ENCODE measurements at regions of chr1 and their contacts with region 1.

Region 1: GRCh38 chr1:38046884-38047602 is 450 bp upstream of the POU3F1 start:
- ATAC-seq: peak; percentile 75 to 86 (median 82)
- H3K4me3 ChIP-seq: peak overlapping the region; percentile 40 to 47 (median 43)
- H3K27ac ChIP-seq: no peak overlapping the region
- H3K4me1 ChIP-seq: peaks cover 45 to 48% of the 10 kb centered on the region in 2 donors

Region 2: DNA sequence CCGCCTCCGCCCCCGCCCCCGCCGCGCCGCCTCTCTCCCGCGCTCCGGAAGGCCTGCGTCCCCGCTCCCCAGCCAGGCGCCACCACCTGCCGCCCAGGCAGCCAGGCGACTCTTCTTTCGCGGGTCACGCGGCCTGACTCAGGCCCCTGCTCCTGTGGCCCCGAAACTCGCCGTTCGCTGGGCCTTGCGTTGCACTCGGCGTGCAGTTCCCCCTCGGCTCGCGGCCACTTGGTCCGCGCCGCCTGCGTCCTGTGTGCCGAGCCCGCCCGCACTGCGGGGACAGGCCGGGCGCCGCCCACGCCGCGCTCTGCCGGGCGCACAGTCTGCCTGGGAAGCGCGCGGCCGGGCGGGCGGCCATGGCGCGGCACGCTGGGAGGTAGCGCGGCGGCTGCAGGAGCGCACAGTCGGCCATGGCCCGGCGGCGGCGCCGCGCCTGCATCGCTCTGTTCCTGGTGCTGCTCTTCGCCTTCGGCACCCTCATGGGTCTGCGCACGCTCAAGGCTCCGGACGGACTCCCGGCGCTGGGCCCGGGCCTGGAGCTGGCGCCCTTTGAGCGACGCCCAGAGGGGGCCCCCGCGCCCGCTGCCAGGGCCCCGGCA is 253.2 kb before region 1 on chr1 and contains the start of gene MANEAL:
- in situ Hi-C with region 1: no loop called
- ATAC-seq: peak; percentile 89 to 94 (median 91)
- H3K4me3 ChIP-seq: peak within 1 kb of the TSS; percentile 45 to 92 (median 63)
- H3K27ac ChIP-seq: peak within 1 kb of the TSS; percentile 14 to 34
- H3K4me1 ChIP-seq: peaks cover 8 to 9% of the 10 kb centered on the region in 2 donors
- total RNA-seq, gene MANEAL: 2.3 to 49.7 (median 30.3) TPM

Region 3: DNA sequence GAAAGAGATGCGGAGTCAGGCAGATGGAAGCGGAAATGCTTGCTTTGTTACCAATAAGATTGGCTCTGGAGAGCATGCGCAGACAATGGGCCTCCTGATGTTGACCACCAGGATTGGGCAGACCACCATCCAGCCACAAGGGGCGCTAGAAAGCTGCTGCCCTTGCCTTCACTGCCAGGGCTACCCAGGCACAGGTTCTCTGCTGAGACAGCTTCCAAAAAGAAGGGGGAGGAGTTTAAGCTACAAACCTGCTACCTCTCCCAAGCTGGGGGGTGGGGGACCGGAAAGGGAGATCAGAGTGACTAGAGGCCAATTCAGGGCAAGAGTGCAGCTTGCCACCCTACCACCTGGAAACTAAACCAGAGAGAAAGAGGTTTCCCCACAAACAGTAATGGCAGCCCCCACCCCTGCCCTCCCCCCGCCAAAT is 442.8 kb after region 1 on chr1:
- in situ Hi-C with region 1: loop called in 1 of 9 experiments (anchors 25 kb)
- ATAC-seq: peak in 6 of 8 experiments; percentile 33 to 72 (median 54)
- H3K4me3 ChIP-seq: no peak overlapping the region
- H3K27ac ChIP-seq: no peak overlapping the region
- H3K4me1 ChIP-seq: peaks cover 22 to 28% of the 10 kb centered on the region in 2 donors

Region 4: DNA sequence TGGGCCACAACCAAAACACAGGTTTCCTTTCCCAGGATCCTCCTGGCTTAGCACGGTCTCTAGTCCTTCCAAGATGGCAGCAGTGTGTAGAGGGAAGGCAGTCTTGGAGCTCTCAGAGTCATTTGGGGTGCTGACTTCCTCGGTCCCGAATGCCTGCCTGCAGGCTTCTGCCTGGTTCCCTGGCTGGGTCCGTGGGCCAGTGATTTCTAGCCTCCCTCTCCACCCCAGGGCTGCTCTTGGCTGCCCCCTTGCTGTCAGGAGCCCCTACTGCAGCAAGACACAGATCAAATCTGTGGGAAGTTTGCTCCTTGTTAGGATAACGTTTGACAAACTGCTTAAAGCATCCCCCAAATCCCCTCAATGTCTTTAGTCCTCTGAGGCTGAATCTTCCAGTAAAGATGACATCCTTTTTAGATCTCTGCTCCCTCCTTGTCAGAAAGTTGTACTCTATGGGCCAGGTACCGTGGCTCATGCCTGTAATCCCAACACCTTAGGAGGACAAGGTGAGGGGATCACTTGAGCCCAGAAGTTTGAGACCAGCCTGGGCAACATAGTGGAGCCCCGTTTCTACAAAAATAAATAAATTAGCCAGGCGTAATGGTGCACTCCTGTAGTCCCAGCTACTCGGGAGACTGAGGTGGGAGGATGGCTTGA is 540.1 kb after region 1 on chr1:
- in situ Hi-C with region 1: loop called in 1 of 9 experiments (anchors 25 kb)
- ATAC-seq: peak; percentile 11 to 73 (median 46)
- H3K4me3 ChIP-seq: no peak overlapping the region
- H3K27ac ChIP-seq: no peak overlapping the region
- H3K4me1 ChIP-seq: no peaks in the 10 kb centered on the region

Region 5: DNA sequence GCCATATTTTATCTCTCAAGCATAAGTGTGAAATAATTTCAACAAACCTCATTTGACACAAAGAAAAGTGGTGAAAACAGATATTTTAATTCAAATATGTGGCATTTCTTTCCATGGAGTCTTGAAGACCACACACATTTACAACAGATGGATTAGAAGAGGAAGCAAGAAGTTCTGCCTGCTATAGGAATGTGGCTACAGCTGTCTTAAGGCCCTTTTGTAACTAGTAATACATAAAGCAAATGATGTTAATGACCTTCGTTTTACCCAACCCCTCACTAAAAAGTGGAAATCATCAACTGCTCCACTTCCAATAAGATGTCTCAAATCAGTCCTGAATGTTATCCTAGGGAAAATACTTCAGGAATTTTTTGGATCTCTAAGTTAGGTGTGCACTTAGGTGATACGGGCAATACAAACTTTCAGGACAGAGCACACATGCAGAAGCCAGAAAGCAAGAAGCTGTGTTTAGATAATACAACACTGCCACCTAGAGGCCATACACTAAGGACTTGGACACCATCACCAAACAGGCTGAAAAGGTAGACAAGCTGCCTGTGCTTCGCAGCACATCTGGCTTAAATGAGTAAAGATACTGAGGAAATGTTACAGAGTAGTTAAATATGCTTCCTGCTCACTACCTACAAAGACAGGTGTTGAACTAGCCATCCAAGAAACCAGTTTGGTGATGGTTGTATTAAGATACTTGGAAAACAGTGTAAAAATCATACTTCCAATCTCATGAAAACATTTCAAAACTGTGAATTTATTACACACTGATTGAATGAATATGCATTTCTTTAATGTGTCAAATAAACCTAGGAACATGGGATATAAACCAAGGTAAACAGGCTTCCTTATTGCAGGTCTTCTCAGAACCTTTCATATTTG is 788.1 kb after region 1 on chr1:
- in situ Hi-C with region 1: loop called in 2 of 9 experiments (anchors 25 kb)
- ATAC-seq: peak; percentile 67 to 97 (median 95)
- H3K4me3 ChIP-seq: no peak overlapping the region
- H3K27ac ChIP-seq: no peak overlapping the region
- H3K4me1 ChIP-seq: peaks cover 5 to 8% of the 10 kb centered on the region in 2 donors

Measured in motor neuron (in vitro differentiated cells).